Calu3 (cell line): ENCODE measurements at regions of chr2 and their contacts with region 1.

Region 1: DNA sequence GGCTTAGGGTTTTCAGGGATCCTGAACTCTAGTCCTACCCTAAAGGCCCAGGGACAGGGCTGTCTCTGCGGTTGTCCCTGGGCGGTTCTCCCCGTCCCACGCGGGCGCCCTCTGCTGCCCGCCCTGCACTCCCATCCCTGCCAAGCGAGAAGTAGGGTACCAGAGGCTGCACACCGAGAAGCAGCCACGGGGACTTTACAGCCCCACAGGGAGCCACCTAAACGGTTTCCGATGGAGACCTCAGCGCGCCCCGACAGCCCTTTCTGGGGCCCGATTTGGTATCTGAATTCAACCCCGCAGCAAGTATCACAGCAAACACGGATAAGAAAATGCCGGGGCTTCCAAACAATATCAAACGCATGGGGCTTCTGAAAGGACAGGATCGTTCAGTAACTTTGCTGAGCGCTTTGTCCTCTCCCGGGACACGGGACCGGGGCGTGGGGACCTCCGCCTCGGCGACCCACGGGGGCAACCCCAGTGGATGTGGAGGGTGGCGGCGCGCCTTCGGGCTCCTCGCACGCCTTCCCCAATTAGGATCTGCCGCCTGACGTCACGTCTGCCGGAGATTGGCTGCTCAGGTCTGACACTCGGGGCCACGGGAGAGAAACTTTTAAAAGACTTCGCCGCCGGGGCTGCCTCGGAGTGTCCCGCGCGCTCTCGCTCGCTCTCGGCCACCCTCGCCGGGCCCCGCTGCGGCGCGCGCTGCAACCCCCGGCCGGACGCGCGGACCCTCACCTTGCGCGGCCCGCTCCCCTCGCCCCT is at the start of gene LTBP1:
- DNase-seq: peak; percentile 81
- H3K4me3 Mint-ChIP-seq: peak within 1 kb of the TSS; percentile 75
- H3K27ac Mint-ChIP-seq: no peak within 1 kb of the TSS
- H3K4me1 Mint-ChIP-seq: peaks cover 22% of the 10 kb centered on the region
- H3K27me3 Mint-ChIP-seq: no peaks in the 10 kb centered on the region
- CTCF ChIP-seq: peak; percentile 68
- total RNA-seq, gene LTBP1: 12.8 and 13.9 TPM in 2 replicates

Region 2: GRCh38 chr2:33069894-33070651 is 123.6 kb after region 1 on chr2:
- CTCF ChIA-PET with region 1: no interaction called
- intact Hi-C with region 1: loop called (anchors 5 kb)
- DNase-seq: peak; percentile 77
- H3K4me3 Mint-ChIP-seq: peak overlapping the region; percentile 53
- H3K27ac Mint-ChIP-seq: peak overlapping the region; percentile 95
- H3K4me1 Mint-ChIP-seq: peaks cover 61% of the 10 kb centered on the region
- H3K27me3 Mint-ChIP-seq: no peaks in the 10 kb centered on the region
- CTCF ChIP-seq: no peak

Region 3: GRCh38 chr2:33372940-33373553 is 426.6 kb after region 1 on chr2:
- CTCF ChIA-PET with region 1: no interaction called
- intact Hi-C with region 1: loop called (anchors 10 kb)
- DNase-seq: peak; percentile 49
- H3K4me3 Mint-ChIP-seq: no peak overlapping the region
- H3K27ac Mint-ChIP-seq: no peak overlapping the region
- H3K4me1 Mint-ChIP-seq: no peaks in the 10 kb centered on the region
- H3K27me3 Mint-ChIP-seq: no peaks in the 10 kb centered on the region
- CTCF ChIP-seq: peak; percentile 61